ENCODE measurements at regions of chr21 and their contacts with region 1.

Region 1: GRCh38 chr21:44480200-44481053 is 25.1 kb downstream of the LRRC3 start:
- DNase-seq: no peak
- H3K4me3 ChIP-seq: no peak overlapping the region
- H3K27ac ChIP-seq: no peak overlapping the region
- H3K4me1 ChIP-seq: no peaks in the 10 kb centered on the region
- H3K27me3 ChIP-seq: peaks cover 0 to 11% of the 10 kb centered on the region in 2 donors
- CTCF ChIP-seq: no peak
- POLR2A ChIP-seq: no peak

Region 2: DNA sequence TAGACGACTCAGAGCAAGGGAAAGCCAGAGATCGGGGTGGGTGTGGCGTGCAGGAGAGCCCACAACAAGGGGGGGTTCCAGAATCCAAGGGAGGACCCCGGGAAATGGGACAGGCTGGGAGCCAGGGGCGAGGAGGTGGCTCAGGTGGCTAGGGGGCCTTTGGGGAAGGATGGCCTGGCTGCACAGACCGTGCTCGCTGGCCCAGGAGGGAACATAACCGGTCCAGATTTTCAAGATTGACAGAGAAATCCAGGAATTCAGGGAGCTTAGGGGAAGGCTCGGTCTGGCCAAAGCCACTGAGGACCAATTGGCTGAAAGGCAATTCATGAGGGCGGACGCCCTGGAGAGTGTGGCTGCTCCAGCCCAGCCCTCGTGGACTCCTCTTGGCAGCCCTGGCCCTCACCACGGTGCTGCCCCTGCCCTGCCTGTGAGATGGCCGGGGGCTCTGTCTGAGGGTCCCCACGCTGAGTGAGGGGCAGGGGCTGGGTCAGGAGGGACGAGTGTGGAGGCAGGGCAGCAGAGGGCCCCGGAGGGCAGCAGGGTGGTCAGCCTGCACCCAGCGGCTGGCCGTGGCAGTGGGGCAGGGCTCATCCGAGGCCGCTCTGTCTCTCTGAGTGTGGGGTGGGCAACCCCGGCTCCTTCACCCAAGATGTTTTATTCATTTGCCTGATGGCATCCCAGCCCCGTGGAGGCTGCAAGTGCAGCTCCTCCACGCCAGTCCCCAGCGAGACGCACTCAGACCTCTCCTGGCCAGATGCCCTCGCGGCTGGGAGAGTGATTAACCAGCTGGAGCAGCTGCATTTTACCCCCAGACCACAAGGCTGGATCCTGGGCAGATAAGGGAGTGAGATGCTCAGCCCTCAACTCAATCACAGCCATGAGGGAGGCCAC is 30.7 kb before region 1 on chr21:
- intact Hi-C with region 1: loop called (anchors 2 kb)
- DNase-seq: peak in 1 of 2 donors; percentile 44
- H3K4me3 ChIP-seq: no peak overlapping the region
- H3K27ac ChIP-seq: no peak overlapping the region
- H3K4me1 ChIP-seq: no peaks in the 10 kb centered on the region
- H3K27me3 ChIP-seq: peaks cover 0 to 30% of the 10 kb centered on the region in 2 donors
- CTCF ChIP-seq: no peak
- POLR2A ChIP-seq: no peak

Measured in breast epithelium (tissue), 4 donors.